ENCODE measurements at regions of chr2 and their contacts with region 1.

Region 1: DNA sequence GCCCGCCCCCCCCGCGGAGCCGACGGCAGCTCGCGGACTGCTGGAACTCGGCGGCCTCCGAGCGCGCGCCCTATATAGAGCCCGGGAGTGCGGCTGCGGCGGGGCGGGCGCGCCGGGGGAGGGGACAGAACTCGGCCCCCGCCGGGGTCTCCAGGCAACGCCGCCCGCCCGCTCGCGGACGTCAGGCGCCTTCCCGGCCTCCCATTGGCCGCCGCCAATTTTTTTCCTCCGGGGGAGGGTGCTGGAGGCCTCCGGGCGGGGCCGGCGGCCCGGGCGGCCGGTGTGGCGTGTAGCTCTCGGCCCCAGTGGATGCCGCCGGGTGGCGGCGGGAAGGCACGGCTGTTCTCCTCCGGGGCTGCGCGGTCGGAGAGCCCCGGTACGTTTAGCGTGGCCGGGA is at the start of gene ZFP36L2:
- DNase-seq: peak; percentile 98
- ATAC-seq: peak; percentile 80 to 84
- total RNA-seq, gene ZFP36L2: 64.0 to 82.1 TPM

Region 2: DNA sequence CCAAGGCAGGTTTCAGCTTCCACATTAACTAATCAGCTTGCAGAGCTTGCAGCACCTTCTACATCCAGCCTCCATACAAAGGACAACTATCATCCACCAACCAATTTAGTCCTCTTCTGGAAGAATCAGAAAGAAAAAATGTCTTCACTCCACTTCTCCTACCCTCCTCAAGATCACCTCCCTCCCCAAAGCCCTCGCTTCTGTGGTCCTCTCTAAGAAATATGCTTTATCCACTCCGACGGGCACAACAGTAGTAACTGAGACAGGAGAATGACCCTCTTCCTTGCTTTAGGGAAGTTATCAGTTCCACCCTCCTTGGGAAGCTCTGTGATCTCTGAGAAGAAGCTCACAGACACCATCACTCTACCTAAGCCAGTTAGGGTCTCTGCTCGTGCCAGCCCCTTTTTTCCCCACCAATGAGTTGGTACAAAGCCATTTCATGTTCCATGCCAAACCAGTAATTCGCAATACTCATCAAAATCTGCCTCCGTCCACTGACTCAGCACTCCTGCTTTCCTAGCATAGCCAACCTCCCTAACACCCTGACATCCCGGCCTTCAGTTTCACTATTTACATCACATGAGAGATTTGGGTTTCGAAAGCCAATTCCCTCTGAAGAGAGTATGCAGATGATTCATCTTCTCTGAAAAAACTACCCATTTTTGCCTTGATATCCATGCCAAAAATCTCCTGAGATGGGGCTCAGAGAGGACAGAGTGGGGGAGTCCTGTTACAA is 1292.8 kb before region 1 on chr2:
- intact Hi-C with region 1: no loop called
- DNase-seq: peak; percentile 41
- ATAC-seq: peak; percentile 46 to 67

Region 3: DNA sequence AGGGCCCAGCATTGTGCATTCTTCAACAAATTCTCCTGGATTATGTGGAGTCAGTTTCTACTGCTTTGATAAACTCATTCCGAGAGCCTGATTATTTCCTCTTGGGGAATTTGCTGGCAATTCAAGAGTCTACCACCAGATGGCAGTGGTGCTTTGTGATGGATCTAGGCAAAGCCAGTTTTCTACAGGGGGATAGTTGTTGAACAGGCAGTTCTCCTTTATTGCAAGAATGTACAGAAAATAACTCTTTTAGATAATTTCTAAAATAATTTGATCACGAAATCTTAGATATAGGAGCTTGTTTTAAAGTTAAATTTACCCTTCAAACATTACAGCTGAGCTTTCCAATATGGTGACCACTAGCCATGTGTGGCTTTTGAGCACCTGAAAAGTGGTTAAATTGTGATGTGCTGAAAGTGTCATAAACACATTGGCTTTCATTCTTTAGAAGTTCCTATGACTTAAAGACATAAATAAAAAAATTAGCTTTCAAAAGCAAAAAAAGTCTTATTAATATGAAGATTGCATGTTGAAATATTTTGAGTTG is 367.5 kb before region 1 on chr2:
- intact Hi-C with region 1: loop called in 1 of 2 experiments (anchors 10 kb)
- DNase-seq: no peak
- ATAC-seq: no peak

Region 4: GRCh38 chr2:42974721-42975717 is 251.5 kb before region 1 on chr2:
- intact Hi-C with region 1: loop called (anchors 2 to 10 kb)
- DNase-seq: peak; percentile 80
- ATAC-seq: peak; percentile 91 to 92

Region 5: DNA sequence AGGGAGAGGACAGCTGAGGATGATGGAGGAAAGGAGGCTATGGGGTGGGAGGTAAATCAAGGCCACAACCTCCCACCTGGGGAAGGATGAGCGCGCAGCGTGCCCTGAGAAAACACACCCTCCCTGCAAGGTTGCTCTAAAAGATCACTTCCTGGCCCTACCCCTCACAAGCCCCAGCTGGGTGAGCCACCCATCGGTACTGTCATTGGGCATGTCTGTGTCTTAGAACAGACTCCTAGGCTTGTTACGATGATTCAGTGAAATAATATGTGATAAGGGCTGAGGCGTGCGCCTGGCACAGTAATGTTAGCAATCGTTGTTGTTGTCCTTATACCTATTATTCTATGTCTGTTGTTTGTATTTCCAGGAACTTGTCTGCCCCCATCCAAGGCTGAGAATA is 175.2 kb before region 1 on chr2:
- intact Hi-C with region 1: no loop called
- DNase-seq: peak; percentile 34
- ATAC-seq: peak in 1 of 2 donors; percentile 63

Region 6: GRCh38 chr2:43075054-43075593 is 151.4 kb before region 1 on chr2:
- intact Hi-C with region 1: no loop called
- DNase-seq: peak; percentile 87
- ATAC-seq: peak; percentile 69 to 85

Region 7: DNA sequence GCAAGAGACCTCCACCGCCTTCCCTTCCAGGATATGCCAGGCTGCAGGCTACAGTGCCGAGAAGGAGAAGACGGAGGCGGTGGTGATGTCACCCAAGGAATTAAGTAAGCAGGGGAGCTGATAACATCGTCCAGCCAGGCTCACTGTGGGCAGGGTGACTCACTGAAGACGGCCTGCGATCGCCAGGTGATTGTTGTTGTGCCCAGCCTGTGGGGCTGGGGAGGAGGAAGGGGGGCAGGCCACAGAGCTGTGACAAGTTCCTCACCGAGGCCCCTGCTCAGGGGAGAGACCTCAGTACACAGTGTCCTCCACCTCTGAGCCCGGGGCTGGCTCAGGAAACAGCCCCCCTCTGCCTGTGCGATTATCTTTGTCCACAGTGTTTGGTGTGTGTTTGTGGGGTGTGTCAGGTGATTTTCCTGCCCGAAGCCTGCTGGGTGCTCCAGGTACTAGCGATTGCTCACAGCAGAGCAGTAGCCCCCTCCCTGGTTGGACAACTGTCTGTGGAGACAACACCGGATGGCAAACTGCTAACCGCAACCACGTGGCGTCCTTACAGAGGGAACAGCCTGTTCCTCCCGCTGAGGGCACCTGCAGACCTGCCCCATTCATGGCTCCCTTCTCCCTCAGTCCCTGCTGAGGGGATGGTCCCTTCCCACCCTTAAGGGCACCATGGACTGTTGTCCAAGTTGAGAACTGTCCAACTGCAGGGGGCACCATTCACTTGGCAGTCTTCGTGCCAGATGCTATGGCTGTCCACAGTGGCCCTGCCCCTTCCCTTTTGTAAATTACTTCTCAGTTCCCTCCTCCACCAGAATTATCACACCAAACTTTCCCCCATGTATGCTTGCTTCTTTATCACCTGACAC is 95.3 kb before region 1 on chr2:
- intact Hi-C with region 1: loop called (anchors 5 to 10 kb)
- DNase-seq: peak; percentile 73
- ATAC-seq: peak; percentile 35 to 71

Region 8: DNA sequence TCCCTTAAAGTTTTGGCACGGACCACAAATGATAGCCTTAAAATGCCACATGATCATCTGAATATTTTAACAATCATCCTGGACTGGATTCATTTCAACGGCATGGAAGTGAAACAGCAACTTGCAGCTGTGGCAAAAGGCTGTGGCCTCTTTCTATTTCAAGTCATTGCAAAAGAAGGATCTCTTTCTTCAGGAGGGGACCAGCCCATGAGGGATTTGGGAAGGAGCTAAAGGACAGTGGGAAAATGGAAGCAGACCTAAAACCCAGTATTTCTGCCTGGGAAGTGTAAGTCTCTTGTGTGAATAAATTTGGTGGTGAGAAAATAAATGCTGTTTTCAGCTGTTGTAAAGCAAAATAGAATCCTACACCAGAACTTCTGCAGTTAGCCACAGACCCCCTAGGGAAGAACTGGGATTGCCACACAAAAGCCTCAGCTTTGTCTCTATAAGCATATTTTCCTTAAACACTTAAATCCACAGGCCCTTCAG is 107.1 kb after region 1 on chr2:
- intact Hi-C with region 1: no loop called
- DNase-seq: peak; percentile 26
- ATAC-seq: peak; percentile 39 to 48

Measured in left cardiac atrium (tissue), 4 donors.